H1 (cell line): ENCODE measurements at regions of chr5 and their contacts with region 1.

Region 1: DNA sequence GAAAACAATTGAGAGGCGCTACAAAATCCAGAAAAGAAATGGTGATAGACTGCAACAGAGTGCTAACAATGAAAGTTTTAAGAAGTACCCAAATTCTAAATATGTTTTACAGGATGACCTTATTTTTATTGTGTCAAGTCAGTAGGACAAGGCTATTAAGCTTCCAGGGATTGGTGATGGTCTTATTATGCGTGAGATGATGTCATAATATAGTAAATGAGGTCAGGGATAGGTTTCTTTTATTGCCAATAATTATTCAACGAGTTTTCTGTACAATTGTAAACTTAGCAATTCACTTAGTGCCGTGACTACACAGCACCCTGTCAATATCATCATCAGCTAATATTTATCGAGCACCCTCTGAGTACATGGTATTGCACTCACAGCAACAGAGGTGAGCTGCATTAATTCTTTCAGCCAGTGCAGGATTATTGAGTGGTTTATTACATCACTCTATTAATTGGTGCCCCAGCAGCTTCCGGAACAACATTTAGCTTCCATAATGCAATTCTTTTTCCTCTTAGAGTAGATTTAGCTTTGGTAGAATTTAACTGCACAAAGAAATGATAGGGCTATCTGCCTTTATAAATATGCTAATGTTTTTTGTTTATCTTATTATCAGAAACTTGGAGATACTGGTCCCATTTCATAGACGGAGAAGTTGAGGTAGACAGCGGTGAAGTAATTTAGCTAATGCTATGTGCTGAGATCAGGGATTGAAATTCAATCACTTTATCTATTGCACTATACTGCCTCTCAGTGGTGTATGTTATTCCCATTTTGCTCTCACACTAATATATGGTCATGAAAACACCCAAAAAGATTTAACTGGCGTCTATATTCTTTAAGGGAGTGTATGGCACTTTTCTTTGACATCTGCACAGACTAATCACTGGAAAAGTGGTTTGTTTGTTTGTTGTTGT is 726.2 kb upstream of the WWC1 start:
- DNase-seq: no peak
- H3K4me3 ChIP-seq: no peak overlapping the region
- H3K27ac ChIP-seq: no peak overlapping the region
- H3K4me1 ChIP-seq: peaks cover 0 to 6% (median 2%) of the 10 kb centered on the region in 4 experiments; a peak in 4 of 7 replicates
- H3K27me3 ChIP-seq: peaks cover 0 to 1% (median 0%) of the 10 kb centered on the region in 4 experiments; a peak in 1 of 7 replicates
- CTCF ChIP-seq: peak in 2 of 3 experiments; percentile 20 to 39; a peak in 2 of 4 replicates
- EP300 ChIP-seq: no peak
- POLR2A ChIP-seq: no peak
- RAD21 ChIP-seq: peak; percentile 71 to 73

Region 2: GRCh38 chr5:167261309-167262100 is 303.8 kb before region 1 on chr5:
- CTCF ChIA-PET with region 1: interaction called, 15 read pairs
- POLR2A ChIA-PET with region 1: no interaction called
- DNase-seq: peak in 1 of 2 experiments; percentile 17
- H3K4me3 ChIP-seq: no peak overlapping the region
- H3K27ac ChIP-seq: no peak overlapping the region
- H3K4me1 ChIP-seq: no peaks in the 10 kb centered on the region
- H3K27me3 ChIP-seq: no peaks in the 10 kb centered on the region; a peak in 1 of 7 replicates
- CTCF ChIP-seq: peak; percentile 35 to 69 (median 67)
- EP300 ChIP-seq: no peak
- POLR2A ChIP-seq: no peak
- RAD21 ChIP-seq: peak; percentile 83 to 90

Region 3: GRCh38 chr5:167460449-167461020 is 104.8 kb before region 1 on chr5:
- CTCF ChIA-PET with region 1: no interaction called
- POLR2A ChIA-PET with region 1: no interaction called
- DNase-seq: no peak
- H3K4me3 ChIP-seq: no peak overlapping the region
- H3K27ac ChIP-seq: no peak overlapping the region
- H3K4me1 ChIP-seq: no peaks in the 10 kb centered on the region
- H3K27me3 ChIP-seq: no peaks in the 10 kb centered on the region
- CTCF ChIP-seq: no peak
- EP300 ChIP-seq: no peak
- POLR2A ChIP-seq: no peak
- RAD21 ChIP-seq: no peak

Region 4: GRCh38 chr5:167587772-167588437 is 22.6 kb after region 1 on chr5:
- CTCF ChIA-PET with region 1: interaction called, 10 read pairs
- POLR2A ChIA-PET with region 1: no interaction called
- DNase-seq: peak in 1 of 2 experiments; percentile 5
- H3K4me3 ChIP-seq: no peak overlapping the region
- H3K27ac ChIP-seq: no peak overlapping the region
- H3K4me1 ChIP-seq: peaks cover 0 to 2% (median 0%) of the 10 kb centered on the region in 4 experiments; a peak in 1 of 7 replicates
- H3K27me3 ChIP-seq: no peaks in the 10 kb centered on the region
- CTCF ChIP-seq: peak; percentile 44 to 82 (median 75)
- EP300 ChIP-seq: no peak
- POLR2A ChIP-seq: no peak
- RAD21 ChIP-seq: peak; percentile 84 to 88